ENCODE measurements at regions of chr4 and their contacts with region 1.

Region 1: DNA sequence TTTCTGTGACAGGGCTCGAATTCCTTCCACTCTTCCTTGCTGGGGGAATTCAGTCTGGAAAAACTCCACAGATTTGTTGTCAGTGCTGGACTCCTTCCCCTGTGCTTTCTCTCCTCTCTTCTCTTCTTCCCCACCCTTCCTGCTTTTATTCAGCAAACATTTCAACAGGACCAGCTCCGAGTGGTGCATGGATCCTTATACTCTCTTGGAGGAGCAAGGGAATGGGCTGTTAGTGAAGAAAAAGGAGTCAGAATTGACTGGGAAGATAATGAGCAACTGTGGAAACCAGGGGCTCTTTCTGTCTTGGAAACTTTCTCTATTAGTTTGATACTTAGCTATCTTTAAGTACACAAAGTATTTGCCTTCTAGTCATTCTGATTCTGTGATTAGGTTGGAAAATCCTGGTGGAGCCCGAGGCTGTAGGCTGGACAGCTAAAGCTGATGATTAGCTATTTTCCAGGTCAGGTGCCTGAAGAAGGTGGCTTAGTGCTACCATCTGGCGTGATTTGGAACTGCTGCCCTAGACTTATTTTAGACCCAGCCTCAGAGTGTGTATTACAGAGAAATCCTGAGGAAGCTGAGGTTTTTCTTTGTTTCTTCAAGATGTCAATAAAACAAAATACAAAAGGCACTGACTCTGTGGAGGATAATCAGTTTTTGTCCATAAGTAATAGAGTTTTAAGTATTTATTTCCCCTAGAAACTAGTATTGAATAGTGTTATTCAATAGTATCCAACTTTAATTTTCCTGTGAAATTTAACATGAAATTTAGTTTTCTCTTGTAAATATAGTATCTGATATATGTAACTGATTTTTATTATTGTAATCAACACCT is 38.4 kb downstream of the NAP1L5 start:
- DNase-seq: peak in 2 of 5 donors; percentile 22 to 41
- H3K4me3 ChIP-seq: no peak overlapping the region
- H3K27ac ChIP-seq: no peak overlapping the region
- H3K4me1 ChIP-seq: no peaks in the 10 kb centered on the region
- H3K27me3 ChIP-seq: no peaks in the 10 kb centered on the region
- CTCF ChIP-seq: peak in 1 of 3 donors; percentile 33
- EP300 ChIP-seq: no peak
- POLR2A ChIP-seq: no peak

Region 2: DNA sequence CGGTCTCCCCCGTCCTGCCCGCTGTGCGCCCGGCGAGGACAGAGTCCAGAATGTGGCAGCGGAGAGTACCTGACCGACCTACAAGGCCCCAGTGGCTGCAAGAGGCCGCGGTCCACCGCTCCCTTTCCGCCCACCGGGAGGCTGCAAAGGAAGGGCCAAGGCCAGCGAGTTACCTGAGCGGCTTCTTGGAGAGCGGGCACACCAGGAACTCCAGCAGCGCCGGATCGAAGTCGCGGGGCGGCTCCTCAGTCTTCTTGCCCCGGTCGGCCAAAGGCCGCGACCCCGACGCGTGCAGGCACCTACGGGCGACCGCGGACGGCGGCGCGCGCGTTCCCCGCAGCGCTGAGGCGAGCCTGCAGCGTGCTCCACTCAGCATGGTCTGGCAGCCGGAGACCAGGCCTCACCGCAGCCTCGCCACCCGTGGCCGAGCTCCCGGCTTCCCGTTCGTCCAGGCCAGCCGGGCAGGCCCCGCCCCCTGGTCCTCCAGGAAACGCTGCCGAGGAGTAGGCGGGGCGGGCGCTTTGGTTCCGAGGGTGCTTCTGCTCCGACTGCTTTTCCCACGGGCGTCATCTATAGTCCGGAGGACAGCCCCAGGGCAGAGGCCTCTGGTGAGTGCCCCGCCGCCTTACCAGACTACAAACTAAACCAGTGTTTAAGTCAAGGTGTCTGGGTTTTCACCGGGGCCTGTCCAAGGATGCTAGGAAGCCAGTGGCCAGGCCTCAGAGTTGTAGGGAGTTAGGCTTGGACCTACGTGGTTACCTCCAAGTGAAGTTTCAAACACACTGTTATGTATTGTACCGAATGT is 135.7 kb before region 1 on chr4 and contains the start of gene PYURF:
- intact Hi-C with region 1: loop called in 1 of 4 experiments (anchors 10 kb)
- DNase-seq: peak; percentile 94 to 97 (median 95)
- H3K4me3 ChIP-seq: peak within 1 kb of the TSS; percentile 96
- H3K27ac ChIP-seq: peak within 1 kb of the TSS; percentile 76 to 90
- H3K4me1 ChIP-seq: peaks cover 6% of the 10 kb centered on the region
- H3K27me3 ChIP-seq: no peaks in the 10 kb centered on the region
- CTCF ChIP-seq: peak in 1 of 3 donors; percentile 11
- EP300 ChIP-seq: peak; percentile 9
- POLR2A ChIP-seq: peak; percentile 87
- total RNA-seq, gene PYURF: 72.5 to 105 (median 91.2) TPM

Region 3: GRCh38 chr4:88533937-88534750 is 125.1 kb before region 1 on chr4:
- intact Hi-C with region 1: loop called in 3 of 4 experiments (anchors 10 kb)
- DNase-seq: no peak
- H3K4me3 ChIP-seq: no peak overlapping the region
- H3K27ac ChIP-seq: no peak overlapping the region
- H3K4me1 ChIP-seq: no peaks in the 10 kb centered on the region
- H3K27me3 ChIP-seq: no peaks in the 10 kb centered on the region
- CTCF ChIP-seq: no peak
- EP300 ChIP-seq: no peak
- POLR2A ChIP-seq: no peak